ENCODE measurements at regions of chr10 and their contacts with region 1.

Region 1: DNA sequence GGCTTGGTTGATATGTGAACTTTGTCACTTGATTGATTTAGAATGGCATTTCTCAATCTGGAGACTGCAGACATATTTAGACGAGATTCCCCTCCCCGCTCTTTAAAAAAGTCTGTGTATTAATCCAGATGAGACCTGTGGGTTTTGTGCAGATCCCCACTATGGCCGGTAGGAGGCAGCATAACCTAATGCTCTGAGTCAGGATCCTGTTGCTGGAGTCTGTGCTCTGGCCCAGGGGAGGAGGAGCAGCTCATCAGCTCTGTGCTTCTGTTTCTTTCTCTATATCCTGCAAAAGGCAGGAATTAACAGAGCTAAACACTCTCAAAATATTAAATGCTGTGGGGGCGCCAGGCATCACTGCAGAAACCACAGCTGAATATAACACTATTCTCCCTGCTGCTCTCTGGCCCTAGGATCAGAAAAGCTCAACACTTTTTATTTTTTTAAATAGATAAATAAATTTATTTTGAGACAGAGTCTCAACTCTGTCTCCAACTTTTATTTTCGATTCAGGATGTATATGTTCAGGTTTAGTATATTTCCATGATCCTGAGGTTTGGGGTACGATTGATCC is 23.9 kb upstream of the SEPHS1 start:
- DNase-seq: peak; percentile 83
- ATAC-seq: peak; percentile 100
- H3K4me3 ChIP-seq: no peak overlapping the region
- H3K27ac ChIP-seq: no peak overlapping the region
- H3K4me1 ChIP-seq: no peaks in the 10 kb centered on the region
- H3K27me3 ChIP-seq: peaks cover 8% of the 10 kb centered on the region
- CTCF ChIP-seq: peak; percentile 98
- POLR2A ChIP-seq: 0 out of 2 replicates have a peak, but pooled peaks have one; percentile 38
- RAD21 ChIP-seq: peak; percentile 97

Region 2: DNA sequence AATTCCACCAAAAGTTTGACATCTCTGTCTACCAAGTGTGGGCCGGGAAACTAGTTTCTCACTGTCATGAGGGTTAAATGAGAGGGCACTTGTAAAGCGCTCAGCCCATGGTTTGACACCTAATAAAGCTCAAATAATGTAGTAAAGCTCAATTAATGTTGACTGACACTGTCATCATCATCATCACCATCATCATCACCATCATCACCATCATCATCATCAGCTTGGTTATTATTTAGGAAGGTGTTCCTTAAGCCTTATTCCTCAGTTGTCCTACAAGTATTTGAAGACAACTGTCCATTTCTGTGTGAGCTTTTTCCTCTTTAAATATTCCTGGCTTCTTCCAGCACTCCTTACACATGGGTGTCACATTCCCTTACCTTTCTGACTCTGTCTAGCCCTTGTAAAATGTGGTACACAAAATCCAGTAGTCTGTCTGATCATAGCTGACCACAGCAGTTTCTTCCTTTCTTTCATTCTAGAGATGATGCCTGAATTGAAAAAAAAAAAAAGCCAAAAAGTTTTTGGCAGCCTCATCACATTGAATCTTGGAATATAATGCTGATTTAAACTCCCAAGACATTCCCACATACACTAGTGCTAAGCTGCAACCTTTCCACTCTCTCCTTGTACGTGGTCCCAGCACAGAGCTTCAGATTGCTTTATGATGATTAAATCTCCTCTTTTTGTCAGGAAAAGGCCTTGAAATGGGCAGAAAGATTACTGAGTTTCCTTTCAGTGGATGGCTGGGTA is 16.7 kb after region 1 on chr10:
- CTCF ChIA-PET with region 1: interaction called, 16 read pairs
- POLR2A ChIA-PET with region 1: interaction called, 6 read pairs
- dilution Hi-C with region 1: no loop called
- in situ Hi-C with region 1: no loop called
- intact Hi-C with region 1: no loop called
- DNase-seq: no peak
- ATAC-seq: no peak
- H3K4me3 ChIP-seq: no peak overlapping the region
- H3K27ac ChIP-seq: no peak overlapping the region
- H3K4me1 ChIP-seq: no peaks in the 10 kb centered on the region
- H3K27me3 ChIP-seq: peaks cover 36% of the 10 kb centered on the region
- CTCF ChIP-seq: no peak
- POLR2A ChIP-seq: no peak
- RAD21 ChIP-seq: no peak

Region 3: GRCh38 chr10:13511409-13511808 is 139.4 kb after region 1 on chr10:
- CTCF ChIA-PET with region 1: interaction called, 10 read pairs
- POLR2A ChIA-PET with region 1: no interaction called
- dilution Hi-C with region 1: no loop called
- in situ Hi-C with region 1: no loop called
- intact Hi-C with region 1: no loop called
- DNase-seq: no peak
- ATAC-seq: no peak
- H3K4me3 ChIP-seq: no peak overlapping the region
- H3K27ac ChIP-seq: no peak overlapping the region
- H3K4me1 ChIP-seq: no peaks in the 10 kb centered on the region
- H3K27me3 ChIP-seq: no peaks in the 10 kb centered on the region
- CTCF ChIP-seq: no peak
- POLR2A ChIP-seq: no peak
- RAD21 ChIP-seq: no peak

Region 4: DNA sequence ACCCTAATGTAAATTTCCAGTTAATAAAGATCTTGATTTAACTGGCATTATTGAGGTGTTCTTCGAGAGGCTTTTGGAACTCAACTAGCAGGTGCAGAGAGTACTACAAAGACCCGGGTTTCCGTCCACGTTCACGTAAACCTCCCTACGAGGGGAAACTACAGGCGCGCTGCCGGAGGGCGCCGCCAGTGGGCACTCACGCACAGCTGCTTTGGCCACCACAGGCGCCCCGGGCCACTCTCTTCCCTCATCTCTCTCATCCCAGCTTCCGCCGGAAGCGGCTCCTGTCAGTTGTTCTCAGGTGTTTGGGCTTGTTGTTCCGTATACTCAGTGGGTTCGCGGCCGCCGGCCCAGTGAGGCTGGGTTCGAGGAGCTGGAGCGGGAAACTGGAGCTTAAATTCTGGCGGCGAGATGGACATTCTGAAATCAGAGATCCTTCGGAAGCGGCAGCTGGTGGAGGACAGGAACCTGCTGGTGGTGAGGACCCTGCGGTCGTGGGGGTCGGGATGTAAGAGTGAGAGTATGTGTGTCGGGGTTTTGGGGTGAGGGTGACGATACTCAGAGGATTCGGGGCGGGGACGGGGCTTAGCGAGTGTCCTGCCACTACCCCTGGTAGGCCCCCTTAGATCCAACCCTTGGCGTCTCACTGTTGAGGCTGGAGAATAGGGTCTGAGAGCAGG is 214.8 kb after region 1 on chr10 and contains the start of gene PRPF18:
- CTCF ChIA-PET with region 1: interaction called, 5 read pairs
- POLR2A ChIA-PET with region 1: no interaction called
- dilution Hi-C with region 1: no loop called
- in situ Hi-C with region 1: no loop called
- intact Hi-C with region 1: loop called (anchors 1 kb)
- DNase-seq: peak; percentile 92
- ATAC-seq: peak; percentile 100
- H3K4me3 ChIP-seq: peak within 1 kb of the TSS; percentile 86
- H3K27ac ChIP-seq: peak within 1 kb of the TSS; percentile 19
- H3K4me1 ChIP-seq: peaks cover 3% of the 10 kb centered on the region; the same call in 1 of the 2 replicates
- H3K27me3 ChIP-seq: peaks cover 8% of the 10 kb centered on the region
- CTCF ChIP-seq: peak; percentile 98
- POLR2A ChIP-seq: peak; percentile 69; the same call in 1 of the 2 replicates
- RAD21 ChIP-seq: peak; percentile 49
- total RNA-seq, gene PRPF18: 10.0 and 34.4 TPM in 2 replicates

Region 5: GRCh38 chr10:13776861-13777311 is 404.9 kb after region 1 on chr10:
- CTCF ChIA-PET with region 1: no interaction called
- POLR2A ChIA-PET with region 1: no interaction called
- dilution Hi-C with region 1: no loop called
- in situ Hi-C with region 1: loop called (anchors 10 kb)
- intact Hi-C with region 1: loop called (anchors 5 kb)
- DNase-seq: peak; percentile 35
- ATAC-seq: no peak
- H3K4me3 ChIP-seq: no peak overlapping the region
- H3K27ac ChIP-seq: peak overlapping the region; percentile 35; the same call in 1 of the 2 replicates
- H3K4me1 ChIP-seq: peaks cover 11% of the 10 kb centered on the region
- H3K27me3 ChIP-seq: no peaks in the 10 kb centered on the region
- CTCF ChIP-seq: no peak
- POLR2A ChIP-seq: no peak
- RAD21 ChIP-seq: no peak

Measured in IMR-90 (cell line).